CD4-positive, alpha-beta T cell (primary cell): ENCODE measurements at regions of chr11 and their contacts with region 1.

Region 1: GRCh38 chr11:102410382-102410784 is 42.2 kb downstream of the TMEM123 start:
- DNase-seq: no peak
- ATAC-seq: no peak
- H3K4me3 ChIP-seq: no peak overlapping the region
- H3K4me3 Mint-ChIP-seq: peak overlapping the region; percentile 32
- H3K27ac ChIP-seq: no peak overlapping the region
- H3K27ac Mint-ChIP-seq: peak overlapping the region; percentile 65
- H3K4me1 ChIP-seq: peaks cover 64% of the 10 kb centered on the region
- H3K4me1 Mint-ChIP-seq: peaks cover 92% of the 10 kb centered on the region
- H3K27me3 ChIP-seq: no peaks in the 10 kb centered on the region
- H3K27me3 Mint-ChIP-seq: no peaks in the 10 kb centered on the region
- CTCF ChIP-seq: no peak

Region 2: GRCh38 chr11:102390667-102391465 is 19.5 kb before region 1 on chr11:
- CTCF ChIA-PET with region 1: interaction called, 12 read pairs
- POLR2A ChIA-PET with region 1: interaction called, 7 read pairs
- intact Hi-C with region 1: no loop called
- DNase-seq: peak in 13 of 14 experiments; percentile 32 to 79 (median 45)
- ATAC-seq: peak; percentile 76
- H3K4me3 ChIP-seq: no peak overlapping the region
- H3K4me3 Mint-ChIP-seq: no peak overlapping the region
- H3K27ac ChIP-seq: peak overlapping the region in 1 of 2 donors; percentile 7
- H3K27ac Mint-ChIP-seq: peak overlapping the region; percentile 37
- H3K4me1 ChIP-seq: peaks cover 23% of the 10 kb centered on the region
- H3K4me1 Mint-ChIP-seq: peaks cover 52% of the 10 kb centered on the region
- H3K27me3 ChIP-seq: no peaks in the 10 kb centered on the region
- H3K27me3 Mint-ChIP-seq: no peaks in the 10 kb centered on the region
- CTCF ChIP-seq: peak; percentile 90

Region 3: DNA sequence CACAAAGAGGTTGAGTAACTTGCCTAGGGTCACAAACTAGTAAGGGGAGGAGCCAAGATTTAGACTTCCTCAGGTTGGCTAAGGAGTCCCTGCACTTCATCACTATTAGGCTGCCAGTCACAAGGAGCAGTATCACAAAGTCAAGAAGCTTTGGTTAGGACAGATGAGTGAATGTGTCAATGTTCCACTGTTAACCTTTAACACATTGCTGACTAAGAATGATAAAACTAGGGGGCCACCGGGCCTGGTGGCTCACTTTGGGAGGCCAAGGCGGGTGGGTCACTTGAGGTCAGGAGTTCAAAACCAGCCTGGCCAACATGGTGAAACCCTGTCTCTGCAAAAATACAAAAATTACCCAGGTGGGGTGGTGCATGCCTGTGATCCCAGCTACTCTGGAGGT is 10.2 kb after region 1 on chr11:
- CTCF ChIA-PET with region 1: interaction called, 4 read pairs
- POLR2A ChIA-PET with region 1: interaction called, 6 read pairs
- intact Hi-C with region 1: loop called in 1 of 2 experiments (anchors 2 kb)
- DNase-seq: no peak
- ATAC-seq: no peak
- H3K4me3 ChIP-seq: no peak overlapping the region
- H3K4me3 Mint-ChIP-seq: peak overlapping the region; percentile 16
- H3K27ac ChIP-seq: peak overlapping the region; percentile 11 to 24
- H3K27ac Mint-ChIP-seq: peak overlapping the region; percentile 81
- H3K4me1 ChIP-seq: peaks cover 62% of the 10 kb centered on the region
- H3K4me1 Mint-ChIP-seq: peaks cover 100% of the 10 kb centered on the region
- H3K27me3 ChIP-seq: no peaks in the 10 kb centered on the region
- H3K27me3 Mint-ChIP-seq: no peaks in the 10 kb centered on the region
- CTCF ChIP-seq: no peak

Region 4: DNA sequence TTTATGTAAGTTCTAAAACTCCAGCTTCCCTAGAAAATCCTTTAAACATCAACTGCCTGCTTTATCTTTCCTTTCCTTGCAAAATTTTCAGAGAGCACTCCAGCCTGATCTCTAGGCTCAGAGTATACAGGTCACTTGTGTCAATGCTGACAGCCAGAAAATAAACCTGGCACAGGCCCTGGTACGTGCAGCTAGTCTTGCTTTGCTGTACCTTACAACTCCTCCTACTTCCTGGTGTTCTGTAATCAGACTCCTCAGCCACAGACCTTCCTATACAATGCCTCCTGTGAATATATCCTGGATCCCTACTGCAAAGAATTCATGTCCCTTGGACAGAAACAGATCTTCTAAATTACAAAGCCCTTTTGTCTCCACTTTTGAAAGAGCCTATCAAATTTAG is 66.4 kb after region 1 on chr11:
- CTCF ChIA-PET with region 1: no interaction called
- POLR2A ChIA-PET with region 1: no interaction called
- intact Hi-C with region 1: no loop called
- DNase-seq: peak in 10 of 14 experiments; percentile 12 to 61 (median 26)
- ATAC-seq: peak; percentile 90
- H3K4me3 ChIP-seq: no peak overlapping the region
- H3K4me3 Mint-ChIP-seq: peak overlapping the region; percentile 69
- H3K27ac ChIP-seq: no peak overlapping the region
- H3K27ac Mint-ChIP-seq: peak overlapping the region; percentile 77
- H3K4me1 ChIP-seq: peaks cover 38% of the 10 kb centered on the region
- H3K4me1 Mint-ChIP-seq: peaks cover 68% of the 10 kb centered on the region
- H3K27me3 ChIP-seq: no peaks in the 10 kb centered on the region
- H3K27me3 Mint-ChIP-seq: no peaks in the 10 kb centered on the region
- CTCF ChIP-seq: no peak